Mammary epithelial cell (primary cell): ENCODE measurements at regions of chr1 and their contacts with region 1.

Region 1: GRCh38 chr1:6367381-6368012 is 26.1 kb downstream of the ACOT7 start:
- DNase-seq: peak; percentile 100
- H3K4me3 ChIP-seq: no peak overlapping the region
- H3K27ac ChIP-seq: peak overlapping the region; percentile 83
- H3K4me1 ChIP-seq: peaks cover 46% of the 10 kb centered on the region
- H3K27me3 ChIP-seq: no peaks in the 10 kb centered on the region
- CTCF ChIP-seq: no peak

Region 2: DNA sequence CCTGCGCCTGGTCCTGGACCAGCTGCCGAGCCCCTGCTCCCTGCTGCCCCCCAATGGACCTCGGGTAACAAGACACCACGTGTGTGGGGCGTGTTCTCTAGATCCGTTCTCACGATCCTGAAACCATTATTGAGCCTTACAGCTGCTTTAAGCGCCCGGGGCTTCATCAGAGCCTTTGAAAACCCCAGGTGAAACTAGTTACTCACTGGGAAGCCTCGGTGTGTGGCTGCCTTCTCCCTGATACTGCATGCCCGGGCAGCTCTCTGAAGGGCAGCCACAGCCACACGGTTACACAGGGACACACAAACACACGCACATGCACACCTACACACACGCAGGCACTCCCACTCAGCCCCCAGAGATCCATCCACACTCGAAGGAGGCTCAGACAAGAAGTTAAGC is 46.9 kb after region 1 on chr1:
- CTCF ChIA-PET with region 1: interaction called, 4 read pairs
- dilution Hi-C with region 1: loop called (anchors 5 kb)
- in situ Hi-C with region 1: no loop called
- intact Hi-C with region 1: no loop called
- DNase-seq: peak; percentile 100
- H3K4me3 ChIP-seq: no peak overlapping the region
- H3K27ac ChIP-seq: peak overlapping the region; percentile 96
- H3K4me1 ChIP-seq: peaks cover 51% of the 10 kb centered on the region
- H3K27me3 ChIP-seq: no peaks in the 10 kb centered on the region
- CTCF ChIP-seq: peak; percentile 62 to 73